T-cell (primary cell): ENCODE measurements at regions of chr11 and their contacts with region 1.

Region 1: DNA sequence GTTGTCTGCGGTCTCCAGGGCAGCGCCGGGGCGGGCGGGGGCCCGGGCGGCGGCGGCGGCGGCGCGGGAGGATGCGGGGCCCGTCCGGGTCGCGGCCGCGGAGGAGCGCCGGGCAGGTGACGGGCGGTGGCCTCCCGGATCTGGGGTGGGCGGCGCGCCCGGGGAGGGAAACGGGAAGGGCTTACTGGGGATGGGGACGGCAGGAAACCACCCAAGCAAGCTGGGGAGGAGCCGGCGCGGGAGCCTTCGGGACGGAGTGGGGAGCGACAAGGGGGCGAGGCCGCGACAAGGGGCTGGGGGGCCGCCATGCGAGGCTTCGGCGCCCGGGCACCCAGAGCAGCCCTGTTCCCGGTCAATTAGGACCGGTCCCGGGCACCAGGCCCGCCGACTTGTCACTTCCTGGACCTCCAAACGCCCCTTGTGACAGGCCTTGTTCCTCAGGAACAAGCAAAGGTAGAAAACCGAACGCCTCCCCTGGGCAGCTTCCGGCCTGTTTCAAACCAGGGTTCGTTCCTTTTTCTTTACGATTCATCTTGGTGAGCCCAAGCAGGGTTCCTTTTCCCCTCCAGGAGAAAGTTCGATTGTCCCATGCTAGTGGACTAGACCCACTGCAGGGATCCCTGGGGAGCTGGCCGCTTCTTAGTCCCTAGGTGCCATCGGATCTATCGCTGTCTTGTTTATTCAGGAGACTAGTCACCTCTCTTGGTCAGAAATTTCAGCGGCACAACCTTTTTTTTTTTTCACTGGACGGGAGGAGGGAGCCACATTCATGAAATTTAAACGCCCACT is 492 bp downstream of the JHY start:
- DNase-seq: peak in 34 of 35 experiments; percentile 12 to 70 (median 31)
- ATAC-seq: peak; percentile 80 to 90 (median 86)
- H3K4me3 ChIP-seq: peak overlapping the region; percentile 51 to 74
- H3K4me3 Mint-ChIP-seq: peak overlapping the region; percentile 82 to 86 (median 83)
- H3K27ac ChIP-seq: peak overlapping the region; percentile 77
- H3K27ac Mint-ChIP-seq: peak overlapping the region; percentile 88 to 89
- H3K4me1 ChIP-seq: peaks cover 0 to 19% of the 10 kb centered on the region in 2 experiments
- H3K4me1 Mint-ChIP-seq: peaks cover 21 to 37% (median 25%) of the 10 kb centered on the region in 3 donors
- H3K27me3 ChIP-seq: no peaks in the 10 kb centered on the region
- H3K27me3 Mint-ChIP-seq: no peaks in the 10 kb centered on the region

Region 2: GRCh38 chr11:124716591-124716990 is 1833.5 kb after region 1 on chr11:
- CTCF ChIA-PET with region 1: interaction called in 1 of 2 experiments, 14 read pairs
- POLR2A ChIA-PET with region 1: no interaction called
- DNase-seq: no peak
- ATAC-seq: no peak
- H3K4me3 ChIP-seq: no peak overlapping the region
- H3K4me3 Mint-ChIP-seq: peak overlapping the region in 1 of 3 donors; percentile 91
- H3K27ac ChIP-seq: no peak overlapping the region
- H3K27ac Mint-ChIP-seq: no peak overlapping the region
- H3K4me1 ChIP-seq: peaks cover 9 to 13% of the 10 kb centered on the region in 2 experiments
- H3K4me1 Mint-ChIP-seq: peaks cover 13 to 22% (median 15%) of the 10 kb centered on the region in 3 donors
- H3K27me3 ChIP-seq: peaks cover 3 to 36% of the 10 kb centered on the region in 2 experiments
- H3K27me3 Mint-ChIP-seq: peaks cover 37 to 38% of the 10 kb centered on the region in 2 donors